GM18951 (cell line): ENCODE measurements at regions of chr17 and their contacts with region 1.

Region 1: DNA sequence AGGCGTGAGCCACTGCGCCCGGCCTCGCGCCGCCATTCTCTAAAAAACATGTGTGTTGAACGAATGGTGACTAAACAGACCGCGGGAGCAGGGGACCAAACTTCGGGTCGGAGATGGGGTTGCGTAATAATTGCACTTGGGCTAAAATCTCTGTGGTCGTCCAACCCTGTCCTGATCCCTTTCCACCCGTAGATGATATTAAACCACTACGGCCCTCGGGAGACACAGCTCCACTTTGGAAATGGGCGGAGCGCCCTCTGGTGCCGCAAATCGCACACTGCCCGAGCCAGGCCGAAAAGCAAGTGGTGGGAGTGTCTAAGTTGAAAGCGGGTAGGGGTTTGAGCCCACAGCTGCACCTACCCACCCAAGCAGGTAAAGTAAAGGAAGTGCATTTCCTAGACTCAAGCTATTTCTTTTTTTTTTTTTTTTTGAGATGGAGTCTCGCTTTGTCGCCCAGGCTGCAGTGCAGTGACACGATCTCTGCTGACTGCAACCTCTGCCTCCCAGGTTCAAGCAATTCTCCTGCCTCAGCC is 17.0 kb downstream of the CAVIN1 start:
- POLR2A ChIP-seq: no peak

Region 2: GRCh38 chr17:41966463-41967140 is 439.4 kb before region 1 on chr17 and contains the start of gene CNP:
- in situ Hi-C with region 1: loop called (anchors 10 kb)
- POLR2A ChIP-seq: peak; percentile 93